ENCODE measurements at regions of chr14 and their contacts with region 1.

Region 1: GRCh38 chr14:51651388-51652167 is at the start of gene FRMD6:
- DNase-seq: peak; percentile 88
- H3K4me3 ChIP-seq: peak within 1 kb of the TSS; percentile 89 to 94 (median 91)
- H3K27ac ChIP-seq: peak within 1 kb of the TSS; percentile 85
- H3K4me1 ChIP-seq: peaks cover 16% of the 10 kb centered on the region
- H3K27me3 ChIP-seq: no peaks in the 10 kb centered on the region
- CTCF ChIP-seq: peak; percentile 51 to 83
- total RNA-seq, gene FRMD6: 191 to 302 TPM

Region 2: DNA sequence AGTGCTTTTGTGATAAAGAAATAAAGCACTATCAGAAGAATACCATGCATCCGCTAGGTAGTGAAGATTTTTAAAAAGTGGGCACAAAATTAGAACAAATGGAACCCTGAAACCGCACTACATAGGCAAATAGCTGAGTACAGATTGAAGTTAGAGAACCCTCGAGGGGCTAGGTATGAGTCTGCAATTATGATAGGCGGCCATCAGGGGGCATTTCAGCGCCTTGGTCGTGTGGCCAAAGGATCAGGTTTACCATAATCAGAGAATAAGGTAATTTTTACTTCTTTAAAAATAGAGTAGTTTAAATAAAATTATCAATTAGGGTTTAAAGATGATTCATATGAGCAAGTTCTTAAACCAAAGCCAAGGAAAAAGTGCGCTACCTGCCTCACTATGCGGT is 281.8 kb before region 1 on chr14:
- CTCF ChIA-PET with region 1: interaction called, 10 read pairs
- dilution Hi-C with region 1: no loop called
- in situ Hi-C with region 1: no loop called
- intact Hi-C with region 1: no loop called
- DNase-seq: no peak
- H3K4me3 ChIP-seq: no peak overlapping the region
- H3K27ac ChIP-seq: no peak overlapping the region
- H3K4me1 ChIP-seq: peaks cover 41% of the 10 kb centered on the region
- H3K27me3 ChIP-seq: no peaks in the 10 kb centered on the region
- CTCF ChIP-seq: peak; percentile 24 to 47

Region 3: GRCh38 chr14:51490205-51490604 is 161.4 kb before region 1 on chr14:
- CTCF ChIA-PET with region 1: no interaction called
- dilution Hi-C with region 1: no loop called
- in situ Hi-C with region 1: no loop called
- intact Hi-C with region 1: loop called (anchors 2 kb)
- DNase-seq: peak; percentile 67
- H3K4me3 ChIP-seq: peak overlapping the region; percentile 55 to 97 (median 85)
- H3K27ac ChIP-seq: peak overlapping the region; percentile 99
- H3K4me1 ChIP-seq: peaks cover 31% of the 10 kb centered on the region
- H3K27me3 ChIP-seq: no peaks in the 10 kb centered on the region
- CTCF ChIP-seq: no peak

Region 4: GRCh38 chr14:51692646-51693045 is 41.1 kb after region 1 on chr14:
- CTCF ChIA-PET with region 1: no interaction called
- dilution Hi-C with region 1: no loop called
- in situ Hi-C with region 1: no loop called
- intact Hi-C with region 1: loop called (anchors 2 kb)
- DNase-seq: peak; percentile 30
- H3K4me3 ChIP-seq: no peak overlapping the region
- H3K27ac ChIP-seq: peak overlapping the region; percentile 52
- H3K4me1 ChIP-seq: peaks cover 38% of the 10 kb centered on the region
- H3K27me3 ChIP-seq: no peaks in the 10 kb centered on the region
- CTCF ChIP-seq: no peak

Region 5: DNA sequence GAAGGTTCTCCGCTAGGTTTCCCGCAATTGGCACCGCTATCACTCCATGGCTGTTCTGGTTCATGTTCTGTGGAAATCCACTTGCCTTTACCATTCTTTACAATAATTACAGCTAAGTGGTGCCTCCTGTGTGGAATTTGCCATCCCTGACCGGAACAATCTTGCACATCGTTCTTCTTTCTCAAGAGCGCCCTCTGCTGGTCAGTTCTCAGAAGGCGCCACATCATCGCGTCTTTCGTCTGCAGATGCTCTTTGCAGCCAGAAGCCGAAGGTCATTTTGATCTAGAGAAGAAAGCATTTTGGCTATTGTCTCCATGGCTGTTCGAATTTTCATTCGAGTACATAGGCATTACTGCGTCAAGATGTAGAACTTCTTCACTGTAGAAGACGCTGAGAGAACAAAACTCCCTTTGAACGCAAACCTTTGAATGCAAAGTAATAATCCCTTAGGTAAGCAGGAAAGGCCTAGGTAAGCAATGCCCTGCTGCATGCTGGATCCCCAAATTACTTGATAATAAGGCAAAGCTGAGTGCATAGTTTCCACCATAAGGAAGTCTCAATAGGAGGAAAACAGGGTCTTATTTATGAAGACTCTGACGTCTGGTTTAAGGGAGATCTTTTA is 327.6 kb after region 1 on chr14:
- CTCF ChIA-PET with region 1: no interaction called
- dilution Hi-C with region 1: no loop called
- in situ Hi-C with region 1: no loop called
- intact Hi-C with region 1: loop called (anchors 2 kb)
- DNase-seq: peak; percentile 54
- H3K4me3 ChIP-seq: no peak overlapping the region
- H3K27ac ChIP-seq: no peak overlapping the region
- H3K4me1 ChIP-seq: no peaks in the 10 kb centered on the region
- H3K27me3 ChIP-seq: no peaks in the 10 kb centered on the region
- CTCF ChIP-seq: peak; percentile 88 to 92

Measured in mammary epithelial cell (primary cell).